ENCODE measurements at regions of chr1 and their contacts with region 1.

Region 1: GRCh38 chr1:32870615-32871363 is at the start of gene FNDC5:
- DNase-seq: no peak
- H3K4me3 Mint-ChIP-seq: peak within 1 kb of the TSS; percentile 61
- H3K27ac Mint-ChIP-seq: no peak within 1 kb of the TSS
- H3K4me1 Mint-ChIP-seq: peaks cover 5% of the 10 kb centered on the region
- H3K27me3 Mint-ChIP-seq: peaks cover 12% of the 10 kb centered on the region
- CTCF ChIP-seq: no peak
- total RNA-seq, gene FNDC5: not detected in 2 replicates

Region 2: DNA sequence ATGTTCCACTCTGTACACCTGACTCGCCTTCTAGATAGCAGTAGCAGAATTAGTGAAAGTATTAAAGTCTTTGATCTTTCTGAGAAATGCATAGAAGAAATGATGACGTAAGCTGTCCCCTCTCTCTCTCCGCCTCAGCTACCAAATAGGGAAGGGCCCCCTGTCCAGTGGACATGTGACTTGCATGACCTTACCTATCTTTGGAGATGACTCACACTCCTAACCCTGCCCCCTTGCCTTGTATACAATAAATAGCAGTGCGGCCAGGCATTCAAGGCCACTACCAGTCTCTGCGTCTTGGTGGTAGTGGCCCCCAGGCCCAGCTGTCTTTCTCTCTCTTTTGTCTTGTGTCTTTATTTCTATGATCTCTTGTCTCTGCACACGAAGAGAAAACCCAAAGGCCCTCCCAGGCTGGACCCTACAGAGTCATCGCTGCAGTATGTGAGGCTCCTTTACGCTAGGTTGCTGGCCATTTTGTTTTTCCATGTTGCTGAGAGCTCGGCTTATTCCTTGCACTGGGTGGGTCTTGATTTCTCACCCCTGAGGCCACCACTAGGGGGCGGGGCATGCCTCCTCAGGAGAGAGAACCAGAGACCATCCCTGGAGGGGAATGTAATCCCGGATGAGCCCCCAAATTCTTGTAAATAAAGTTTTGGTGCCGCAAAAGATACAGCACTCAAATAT is 421.9 kb before region 1 on chr1:
- CTCF ChIA-PET with region 1: interaction called, 4 read pairs
- POLR2A ChIA-PET with region 1: interaction called, 3 read pairs
- intact Hi-C with region 1: loop called (anchors 1 kb)
- DNase-seq: peak; percentile 69
- H3K4me3 Mint-ChIP-seq: no peak overlapping the region
- H3K27ac Mint-ChIP-seq: no peak overlapping the region
- H3K4me1 Mint-ChIP-seq: peaks cover 9% of the 10 kb centered on the region
- H3K27me3 Mint-ChIP-seq: peaks cover 13% of the 10 kb centered on the region
- CTCF ChIP-seq: peak; percentile 28

Region 3: GRCh38 chr1:32848354-32849063 is 22.3 kb before region 1 on chr1:
- CTCF ChIA-PET with region 1: interaction called, 15 read pairs
- POLR2A ChIA-PET with region 1: no interaction called
- intact Hi-C with region 1: no loop called
- DNase-seq: no peak
- H3K4me3 Mint-ChIP-seq: no peak overlapping the region
- H3K27ac Mint-ChIP-seq: no peak overlapping the region
- H3K4me1 Mint-ChIP-seq: no peaks in the 10 kb centered on the region
- H3K27me3 Mint-ChIP-seq: no peaks in the 10 kb centered on the region
- CTCF ChIP-seq: no peak

Region 4: DNA sequence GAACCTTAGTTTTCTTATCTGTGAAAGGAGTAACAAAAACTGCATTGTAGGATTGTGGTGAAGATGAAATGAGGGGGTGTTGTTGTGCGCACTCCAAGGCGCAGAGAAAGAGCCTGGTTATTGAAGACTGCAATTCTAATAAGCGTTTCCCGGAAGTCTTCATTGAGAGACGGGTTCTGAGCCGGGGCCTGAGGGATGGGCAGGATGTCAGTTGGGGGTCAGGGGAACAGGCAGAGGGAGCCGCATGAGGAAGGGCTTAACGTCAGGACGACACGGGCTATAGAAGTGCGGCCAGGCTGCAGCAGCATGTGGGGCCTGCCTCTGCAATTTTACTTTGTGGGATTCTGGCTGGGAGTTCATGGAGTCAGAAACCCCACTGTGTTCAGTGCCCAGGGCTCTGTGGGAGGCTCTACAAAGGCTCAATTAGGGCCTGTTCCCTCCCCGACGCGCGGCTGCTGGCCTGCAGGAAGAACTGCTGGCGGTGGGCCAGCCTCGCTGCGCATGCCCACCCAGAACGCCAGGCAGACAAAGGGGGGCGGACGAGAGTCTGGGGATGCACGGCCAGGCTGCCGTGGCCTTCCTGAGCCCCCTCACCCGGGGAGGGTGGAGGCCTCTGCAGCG is 290.4 kb after region 1 on chr1:
- CTCF ChIA-PET with region 1: no interaction called
- POLR2A ChIA-PET with region 1: no interaction called
- intact Hi-C with region 1: no loop called
- DNase-seq: no peak
- H3K4me3 Mint-ChIP-seq: no peak overlapping the region
- H3K27ac Mint-ChIP-seq: no peak overlapping the region
- H3K4me1 Mint-ChIP-seq: no peaks in the 10 kb centered on the region
- H3K27me3 Mint-ChIP-seq: no peaks in the 10 kb centered on the region
- CTCF ChIP-seq: no peak

Measured in MCF 10A (cell line).